ENCODE measurements at regions of chr1 and their contacts with region 1.

Region 1: GRCh38 chr1:205354259-205354904 is 2.3 kb downstream of the KLHDC8A start:
- DNase-seq: no peak
- H3K4me3 ChIP-seq: no peak overlapping the region
- H3K27ac ChIP-seq: no peak overlapping the region
- H3K4me1 ChIP-seq: peaks cover 0 to 13% (median 11%) of the 10 kb centered on the region in 4 donors
- H3K27me3 ChIP-seq: peaks cover 0 to 31% (median 0%) of the 10 kb centered on the region in 4 donors
- CTCF ChIP-seq: peak; percentile 82 to 90 (median 83)
- EP300 ChIP-seq: no peak
- POLR2A ChIP-seq: no peak

Region 2: DNA sequence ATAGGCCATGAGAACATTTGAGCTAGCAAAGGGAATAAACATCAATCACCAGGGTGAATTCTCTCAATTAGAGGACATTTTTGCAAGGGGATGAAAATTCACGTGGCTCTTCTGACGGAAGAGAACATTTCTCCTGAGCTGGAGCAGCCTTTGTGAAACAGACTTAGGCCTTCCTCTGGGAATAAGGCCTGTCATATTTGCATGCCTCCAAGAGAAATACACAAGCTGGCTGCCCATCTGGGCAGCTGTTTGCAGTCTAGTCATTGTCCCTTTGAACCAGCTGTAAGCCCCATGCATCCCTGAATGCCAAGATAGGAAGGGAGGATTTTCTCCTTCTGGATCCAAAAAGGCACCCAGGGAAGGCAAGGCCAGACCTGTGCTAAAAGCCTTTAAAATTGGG is 61.9 kb after region 1 on chr1:
- intact Hi-C with region 1: no loop called
- DNase-seq: no peak
- H3K4me3 ChIP-seq: no peak overlapping the region
- H3K27ac ChIP-seq: no peak overlapping the region
- H3K4me1 ChIP-seq: peaks cover 0 to 5% (median 0%) of the 10 kb centered on the region in 4 donors
- H3K27me3 ChIP-seq: no peaks in the 10 kb centered on the region
- CTCF ChIP-seq: no peak
- EP300 ChIP-seq: no peak
- POLR2A ChIP-seq: no peak

Region 3: DNA sequence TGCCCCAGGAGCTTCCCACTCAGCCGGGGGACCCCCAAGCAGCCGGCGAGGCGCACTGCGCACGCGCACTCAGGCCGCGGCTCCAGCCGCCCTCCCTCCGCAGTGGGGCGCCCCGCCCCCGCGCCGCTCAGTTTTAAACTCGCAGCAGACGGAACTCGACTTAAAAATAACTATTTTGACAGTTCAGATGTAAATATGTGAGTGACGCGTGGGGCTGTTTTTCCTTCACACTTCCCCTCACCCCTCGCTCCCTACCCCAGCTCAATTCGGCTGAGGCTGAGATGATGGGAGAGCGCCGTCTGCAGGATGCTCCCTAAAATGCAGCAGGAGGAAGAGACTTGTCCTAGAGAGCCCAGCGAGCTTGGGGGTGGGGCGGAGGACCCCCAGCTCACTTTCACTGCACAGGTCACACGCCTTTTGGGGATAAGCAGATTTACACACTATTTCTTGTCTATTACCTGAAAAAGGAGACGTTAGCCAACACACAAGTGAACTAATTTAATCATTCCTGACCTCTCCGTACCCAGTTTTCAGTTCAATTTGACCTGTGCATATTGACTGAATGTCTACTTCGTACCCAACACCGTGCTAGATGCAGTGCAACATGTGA is 76.4 kb after region 1 on chr1:
- intact Hi-C with region 1: loop called (anchors 5 kb)
- DNase-seq: no peak
- H3K4me3 ChIP-seq: peak overlapping the region; percentile 53 to 60 (median 56)
- H3K27ac ChIP-seq: no peak overlapping the region
- H3K4me1 ChIP-seq: peaks cover 5 to 14% (median 12%) of the 10 kb centered on the region in 4 donors
- H3K27me3 ChIP-seq: peaks cover 0 to 17% (median 3%) of the 10 kb centered on the region in 4 donors
- CTCF ChIP-seq: peak; percentile 78 to 87 (median 80)
- EP300 ChIP-seq: no peak
- POLR2A ChIP-seq: no peak

Region 4: DNA sequence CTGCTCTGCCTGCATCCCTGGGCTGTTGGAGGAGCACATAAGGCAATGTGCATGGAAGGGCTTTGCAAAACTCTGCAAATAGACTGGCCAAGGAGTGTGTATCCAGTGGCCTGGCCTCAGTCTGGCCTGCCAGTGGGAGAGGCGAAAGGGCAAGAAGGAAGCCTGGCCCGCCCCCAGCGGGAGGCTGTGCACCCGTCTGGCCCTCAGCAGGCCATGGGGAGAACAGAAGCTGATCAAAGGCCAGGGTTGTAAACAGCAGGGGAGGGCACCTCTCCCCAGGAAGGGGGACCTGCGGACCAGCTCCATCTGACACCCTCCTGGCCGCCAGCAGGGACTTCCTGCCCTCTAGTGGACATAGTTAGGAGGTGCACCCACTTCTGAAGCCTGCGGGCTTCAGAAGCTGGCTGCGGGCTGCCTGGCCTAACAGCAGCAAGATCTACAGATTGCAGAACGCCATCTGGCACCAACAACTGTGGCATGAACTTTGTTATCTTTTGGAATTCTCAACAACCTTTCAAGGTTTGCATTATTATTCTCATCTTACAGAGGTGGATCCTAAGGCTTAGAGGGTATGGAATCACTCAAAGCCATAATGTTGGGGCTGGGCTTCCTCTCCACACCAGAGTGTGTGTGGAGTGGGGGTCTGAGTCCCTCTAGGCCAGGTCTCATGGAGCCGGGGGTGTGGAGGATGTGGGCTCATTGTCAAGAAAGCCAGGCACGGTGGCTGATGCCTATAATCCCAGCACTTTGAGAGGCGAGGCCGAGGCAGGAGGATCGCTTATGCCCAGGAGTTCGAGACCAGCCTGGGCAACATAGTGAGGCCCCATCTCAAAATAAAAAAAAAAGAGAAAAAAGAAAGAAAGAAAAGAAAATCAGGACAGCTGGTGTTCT is 131.2 kb after region 1 on chr1:
- intact Hi-C with region 1: loop called (anchors 5 kb)
- DNase-seq: no peak
- H3K4me3 ChIP-seq: no peak overlapping the region
- H3K27ac ChIP-seq: no peak overlapping the region
- H3K4me1 ChIP-seq: peaks cover 0 to 2% (median 0%) of the 10 kb centered on the region in 4 donors
- H3K27me3 ChIP-seq: peaks cover 0 to 64% (median 0%) of the 10 kb centered on the region in 4 donors
- CTCF ChIP-seq: peak; percentile 91 to 99 (median 92)
- EP300 ChIP-seq: no peak
- POLR2A ChIP-seq: no peak